Breast epithelium (tissue), 4 donors: ENCODE measurements at regions of chr3 and their contacts with region 1.

Region 1: GRCh38 chr3:75232219-75232618 is 431.9 kb upstream of the FRG2C start:
- DNase-seq: no peak
- H3K4me3 ChIP-seq: no peak overlapping the region
- H3K27ac ChIP-seq: no peak overlapping the region
- H3K4me1 ChIP-seq: no peaks in the 10 kb centered on the region
- H3K27me3 ChIP-seq: no peaks in the 10 kb centered on the region
- CTCF ChIP-seq: no peak
- POLR2A ChIP-seq: no peak

Region 2: DNA sequence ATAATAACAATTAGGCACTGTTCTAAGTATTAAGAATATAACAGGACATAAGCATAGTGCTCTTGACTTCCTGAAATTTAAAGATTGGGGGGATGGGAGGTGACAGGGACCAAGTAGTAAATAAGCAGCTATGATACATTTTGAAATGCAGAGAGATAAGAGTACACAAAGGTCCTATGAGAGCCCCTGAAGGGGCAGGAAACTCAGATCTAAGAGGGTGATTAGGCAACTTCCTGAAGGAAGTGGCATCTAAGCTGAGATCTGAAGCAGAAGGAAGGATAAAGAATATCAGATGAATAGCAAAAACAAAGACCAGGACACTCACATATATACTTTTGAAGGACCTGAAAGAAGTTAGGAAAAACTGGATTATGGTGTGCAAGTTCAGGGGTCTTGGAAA is 16.8 kb after region 1 on chr3:
- intact Hi-C with region 1: loop called (anchors 2 kb)
- DNase-seq: no peak
- H3K4me3 ChIP-seq: no peak overlapping the region
- H3K27ac ChIP-seq: no peak overlapping the region
- H3K4me1 ChIP-seq: no peaks in the 10 kb centered on the region
- H3K27me3 ChIP-seq: no peaks in the 10 kb centered on the region
- CTCF ChIP-seq: no peak
- POLR2A ChIP-seq: no peak